ENCODE measurements at regions of chr17 and their contacts with region 1.

Region 1: DNA sequence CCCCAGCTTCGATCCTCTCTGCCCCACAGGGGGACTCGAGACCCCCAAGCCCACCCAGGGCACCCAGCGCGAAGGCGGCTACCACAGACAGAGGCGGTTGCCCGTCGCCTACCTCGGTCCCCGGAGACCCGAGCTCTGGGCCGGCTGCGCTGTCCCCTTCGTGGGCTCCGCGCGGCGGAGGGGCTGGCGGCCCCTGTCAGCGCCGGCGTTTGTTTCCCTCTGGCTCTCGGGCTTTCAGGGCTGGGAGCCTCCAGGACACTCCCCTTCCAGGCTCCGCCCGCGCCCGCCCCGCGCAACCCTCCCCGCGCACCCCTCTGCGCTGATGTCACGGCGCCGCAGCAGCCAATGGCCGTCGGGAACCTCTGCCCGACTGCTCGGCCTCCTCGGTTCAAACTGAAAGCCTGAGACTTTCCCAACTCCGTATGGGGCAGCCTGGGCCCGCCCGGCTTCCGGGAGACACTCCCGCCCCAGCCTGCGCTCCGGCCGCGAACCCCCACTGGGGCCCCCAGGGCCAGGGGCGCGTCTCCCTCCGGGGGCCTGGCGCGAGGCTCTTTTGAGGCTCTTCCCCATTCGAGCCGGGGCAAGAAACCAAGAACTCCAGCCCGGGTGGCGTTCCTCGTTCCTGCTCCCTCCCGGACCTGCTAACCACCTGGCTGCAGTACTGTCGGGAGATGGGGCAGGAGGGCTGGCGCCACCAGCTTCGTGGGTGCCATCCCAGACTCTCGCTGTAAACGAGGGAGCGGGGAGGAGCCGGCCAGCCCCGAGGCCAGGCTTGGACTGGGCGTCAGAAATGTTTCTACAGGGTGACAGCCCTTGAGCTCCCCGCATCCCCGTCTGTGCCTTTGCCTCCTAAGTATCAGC is at the start of gene CDC42EP4:
- DNase-seq: peak; percentile 96
- ATAC-seq: peak; percentile 89
- H3K4me3 Mint-ChIP-seq: peak within 1 kb of the TSS; percentile 87
- H3K27ac Mint-ChIP-seq: no peak within 1 kb of the TSS
- H3K4me1 Mint-ChIP-seq: peaks cover 33% of the 10 kb centered on the region
- H3K27me3 Mint-ChIP-seq: peaks cover 16% of the 10 kb centered on the region
- CTCF ChIP-seq: no peak
- total RNA-seq, gene CDC42EP4: 17.0 to 18.8 TPM (median 18.4 TPM) in 3 replicates

Region 2: GRCh38 chr17:73342050-73342522 is 30.1 kb after region 1 on chr17:
- CTCF ChIA-PET with region 1: interaction called, 33 read pairs
- POLR2A ChIA-PET with region 1: interaction called, 55 read pairs
- DNase-seq: peak; percentile 75
- ATAC-seq: peak; percentile 74
- H3K4me3 Mint-ChIP-seq: peak overlapping the region; percentile 18; the same call in 1 of the 2 replicates
- H3K27ac Mint-ChIP-seq: peak overlapping the region; percentile 83
- H3K4me1 Mint-ChIP-seq: peaks cover 48% of the 10 kb centered on the region
- H3K27me3 Mint-ChIP-seq: no peaks in the 10 kb centered on the region
- CTCF ChIP-seq: no peak

Region 3: DNA sequence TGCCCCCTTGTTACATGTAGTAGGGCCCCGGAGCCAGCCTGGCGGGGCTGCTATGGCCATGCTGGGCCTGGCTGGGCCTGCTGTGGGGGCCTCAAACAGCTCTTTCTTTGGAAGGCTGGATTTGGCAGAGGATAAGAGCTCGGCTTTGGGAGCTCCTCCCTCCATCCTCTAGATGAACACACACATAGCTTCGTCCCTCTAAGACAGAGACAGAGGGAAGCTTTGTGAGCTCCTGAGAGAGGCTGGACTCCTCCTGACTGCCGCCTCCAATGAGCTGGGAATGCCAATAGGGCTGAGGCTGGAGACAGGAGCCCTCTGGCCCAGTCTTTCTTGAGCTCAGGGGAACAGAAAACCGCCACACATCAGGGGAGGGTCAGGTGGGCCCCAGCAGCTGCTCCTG is 37.1 kb after region 1 on chr17:
- CTCF ChIA-PET with region 1: interaction called, 33 read pairs
- POLR2A ChIA-PET with region 1: interaction called, 7 read pairs
- DNase-seq: no peak
- ATAC-seq: peak; percentile 10; the same call in 1 of the 2 replicates
- H3K4me3 Mint-ChIP-seq: no peak overlapping the region
- H3K27ac Mint-ChIP-seq: no peak overlapping the region
- H3K4me1 Mint-ChIP-seq: peaks cover 33% of the 10 kb centered on the region
- H3K27me3 Mint-ChIP-seq: no peaks in the 10 kb centered on the region
- CTCF ChIP-seq: no peak

Region 4: DNA sequence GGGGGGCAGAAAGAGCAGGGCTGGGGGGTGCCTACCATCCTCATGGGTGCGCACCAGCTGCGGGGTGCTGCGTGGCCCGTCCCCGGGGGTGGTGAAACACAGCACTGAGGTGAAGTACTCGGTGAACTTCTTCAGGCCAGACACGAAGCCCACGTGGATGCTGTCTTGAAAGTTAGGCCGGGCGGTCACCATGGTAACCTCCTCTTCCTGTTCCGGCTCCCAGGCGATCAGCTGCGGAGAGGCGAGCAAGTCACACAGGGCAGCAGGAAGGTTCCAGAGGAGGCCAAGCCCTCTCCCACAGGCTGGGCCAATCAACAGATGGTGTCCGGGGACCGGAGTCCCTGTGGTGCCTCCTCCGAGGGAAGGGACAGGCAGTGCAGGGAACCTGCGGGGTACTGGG is 89.9 kb after region 1 on chr17:
- CTCF ChIA-PET with region 1: no interaction called
- POLR2A ChIA-PET with region 1: no interaction called
- DNase-seq: peak; percentile 63
- ATAC-seq: peak; percentile 94
- H3K4me3 Mint-ChIP-seq: no peak overlapping the region
- H3K27ac Mint-ChIP-seq: no peak overlapping the region
- H3K4me1 Mint-ChIP-seq: no peaks in the 10 kb centered on the region
- H3K27me3 Mint-ChIP-seq: no peaks in the 10 kb centered on the region
- CTCF ChIP-seq: no peak

Region 5: GRCh38 chr17:73501431-73501830 is 189.4 kb after region 1 on chr17:
- CTCF ChIA-PET with region 1: no interaction called
- POLR2A ChIA-PET with region 1: no interaction called
- DNase-seq: no peak
- ATAC-seq: no peak
- H3K4me3 Mint-ChIP-seq: no peak overlapping the region
- H3K27ac Mint-ChIP-seq: no peak overlapping the region
- H3K4me1 Mint-ChIP-seq: peaks cover 8% of the 10 kb centered on the region
- H3K27me3 Mint-ChIP-seq: no peaks in the 10 kb centered on the region
- CTCF ChIP-seq: no peak

Measured in WTC11 (cell line).